T-cell (primary cell): ENCODE measurements at regions of chr2 and their contacts with region 1.

Region 1: GRCh38 chr2:222709191-222709891 is 37.9 kb downstream of the MOGAT1 start:
- DNase-seq: peak in 1 of 35 experiments; percentile 29
- ATAC-seq: no peak
- H3K4me3 ChIP-seq: no peak overlapping the region
- H3K4me3 Mint-ChIP-seq: no peak overlapping the region
- H3K27ac ChIP-seq: no peak overlapping the region
- H3K27ac Mint-ChIP-seq: no peak overlapping the region
- H3K4me1 ChIP-seq: peaks cover 0 to 4% of the 10 kb centered on the region in 2 experiments
- H3K4me1 Mint-ChIP-seq: peaks cover 0 to 6% (median 4%) of the 10 kb centered on the region in 3 donors
- H3K27me3 ChIP-seq: peaks cover 0 to 24% of the 10 kb centered on the region in 2 experiments
- H3K27me3 Mint-ChIP-seq: peaks cover 31 to 48% of the 10 kb centered on the region in 2 donors

Region 2: GRCh38 chr2:221931251-221931991 is 777.9 kb before region 1 on chr2:
- CTCF ChIA-PET with region 1: no interaction called
- POLR2A ChIA-PET with region 1: no interaction called
- DNase-seq: no peak
- ATAC-seq: no peak
- H3K4me3 ChIP-seq: no peak overlapping the region
- H3K4me3 Mint-ChIP-seq: no peak overlapping the region
- H3K27ac ChIP-seq: no peak overlapping the region
- H3K27ac Mint-ChIP-seq: no peak overlapping the region
- H3K4me1 ChIP-seq: no peaks in the 10 kb centered on the region
- H3K4me1 Mint-ChIP-seq: no peaks in the 10 kb centered on the region
- H3K27me3 ChIP-seq: no peaks in the 10 kb centered on the region
- H3K27me3 Mint-ChIP-seq: no peaks in the 10 kb centered on the region

Region 3: DNA sequence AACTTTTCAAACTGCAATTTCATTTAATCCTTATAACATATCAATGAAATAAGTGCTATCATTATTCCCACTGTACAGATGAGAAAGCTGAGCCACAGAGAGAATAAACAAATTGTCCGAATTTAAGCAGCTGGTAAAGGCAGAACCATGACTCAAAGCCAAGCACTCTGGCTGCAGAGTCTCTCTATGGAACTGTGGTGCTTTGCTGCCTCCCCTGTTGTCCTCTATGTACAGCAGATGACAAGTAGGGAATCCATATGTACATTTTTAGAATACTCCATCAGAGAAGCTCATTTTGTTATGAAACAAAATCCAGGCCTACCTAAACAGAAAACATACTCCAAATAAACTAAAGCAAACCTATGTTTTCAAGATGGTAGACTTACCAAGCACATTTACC is 98.6 kb before region 1 on chr2:
- CTCF ChIA-PET with region 1: no interaction called
- POLR2A ChIA-PET with region 1: no interaction called
- DNase-seq: no peak
- ATAC-seq: no peak
- H3K4me3 ChIP-seq: no peak overlapping the region
- H3K4me3 Mint-ChIP-seq: no peak overlapping the region
- H3K27ac ChIP-seq: no peak overlapping the region
- H3K27ac Mint-ChIP-seq: no peak overlapping the region
- H3K4me1 ChIP-seq: no peaks in the 10 kb centered on the region
- H3K4me1 Mint-ChIP-seq: peaks cover 0 to 1% (median 0%) of the 10 kb centered on the region in 3 donors
- H3K27me3 ChIP-seq: no peaks in the 10 kb centered on the region
- H3K27me3 Mint-ChIP-seq: no peaks in the 10 kb centered on the region

Region 4: DNA sequence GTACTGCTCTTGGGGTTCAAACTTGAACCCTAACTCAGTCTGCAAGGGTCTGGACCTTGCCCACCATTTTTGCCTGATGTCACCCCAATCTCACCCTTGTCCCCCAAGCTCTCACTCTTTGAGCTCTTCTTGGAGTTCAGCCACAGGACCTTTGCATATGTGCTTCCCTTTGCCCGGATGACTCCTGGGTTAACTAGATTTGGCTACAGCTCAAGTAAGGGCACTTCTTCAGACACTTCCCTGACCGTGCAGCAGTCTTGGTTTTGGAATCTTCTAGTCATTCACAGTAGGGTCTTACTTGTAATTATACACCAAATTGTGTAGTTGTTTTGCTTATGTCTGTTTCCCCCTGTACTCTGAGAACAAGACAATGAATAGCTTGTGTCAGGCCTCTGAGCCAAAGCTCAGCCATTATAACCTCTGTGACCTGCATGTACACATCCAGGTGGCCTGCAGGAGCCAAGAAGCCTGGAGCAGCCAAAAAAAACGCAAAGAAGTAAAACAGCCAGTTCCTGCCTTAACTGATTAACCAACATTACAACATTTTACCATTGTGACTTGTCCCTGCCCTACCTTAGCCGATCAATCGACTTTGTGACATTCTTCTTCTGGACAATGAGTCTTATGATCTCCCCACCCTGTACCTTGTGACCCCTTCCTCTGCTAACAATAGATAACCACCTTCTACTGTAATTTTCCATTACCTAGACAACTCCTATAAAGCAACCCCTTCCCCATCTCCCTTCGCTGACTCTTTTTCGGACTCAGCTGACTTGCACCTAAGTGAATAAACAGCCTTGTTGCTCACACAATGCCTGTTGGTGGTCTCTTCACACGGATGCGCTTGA is 38.9 kb before region 1 on chr2:
- CTCF ChIA-PET with region 1: no interaction called
- POLR2A ChIA-PET with region 1: no interaction called
- DNase-seq: no peak
- ATAC-seq: no peak
- H3K4me3 ChIP-seq: no peak overlapping the region
- H3K4me3 Mint-ChIP-seq: peak overlapping the region in 1 of 3 donors; percentile 38
- H3K27ac ChIP-seq: no peak overlapping the region
- H3K27ac Mint-ChIP-seq: no peak overlapping the region
- H3K4me1 ChIP-seq: peaks cover 0 to 10% of the 10 kb centered on the region in 2 experiments
- H3K4me1 Mint-ChIP-seq: peaks cover 9 to 14% (median 10%) of the 10 kb centered on the region in 3 donors
- H3K27me3 ChIP-seq: peaks cover 15 to 19% of the 10 kb centered on the region in 2 experiments
- H3K27me3 Mint-ChIP-seq: peaks cover 58 to 66% of the 10 kb centered on the region in 2 donors

Region 5: GRCh38 chr2:222903234-222904220 is 194.2 kb after region 1 on chr2:
- CTCF ChIA-PET with region 1: interaction called, 8 to 11 read pairs
- POLR2A ChIA-PET with region 1: interaction called in 1 of 2 experiments, 5 read pairs
- DNase-seq: peak in 25 of 35 experiments; percentile 3 to 62 (median 15)
- ATAC-seq: peak in 1 of 4 experiments; percentile 73
- H3K4me3 ChIP-seq: no peak overlapping the region
- H3K4me3 Mint-ChIP-seq: no peak overlapping the region
- H3K27ac ChIP-seq: no peak overlapping the region
- H3K27ac Mint-ChIP-seq: no peak overlapping the region
- H3K4me1 ChIP-seq: peaks cover 0 to 3% of the 10 kb centered on the region in 2 experiments
- H3K4me1 Mint-ChIP-seq: peaks cover 27 to 50% (median 37%) of the 10 kb centered on the region in 3 donors
- H3K27me3 ChIP-seq: no peaks in the 10 kb centered on the region
- H3K27me3 Mint-ChIP-seq: no peaks in the 10 kb centered on the region